Dorsolateral prefrontal cortex (tissue), 120 donors: ENCODE measurements at regions of chr9 and their contacts with region 1.

Region 1: GRCh38 chr9:129610473-129611301 is 10.2 kb downstream of the C9orf50 start:
- DNase-seq: peak in 9 of 10 donors; percentile 64 to 81 (median 76)
- H3K4me3 ChIP-seq: peak overlapping the region; percentile 40 to 70 (median 60)
- H3K27ac ChIP-seq: peak overlapping the region; percentile 5 to 97 (median 92)
- H3K27me3 ChIP-seq: no peaks in the 10 kb centered on the region
- CTCF ChIP-seq: peak; percentile 59 to 99 (median 86)

Region 2: GRCh38 chr9:129177791-129178559 is 432.7 kb before region 1 on chr9 and contains the start of gene IER5L:
- intact Hi-C with region 1: loop called (anchors 1 to 2 kb)
- DNase-seq: peak; percentile 94 to 99 (median 98)
- H3K4me3 ChIP-seq: peak within 1 kb of the TSS; percentile 61 to 94 (median 84)
- H3K27ac ChIP-seq: peak within 1 kb of the TSS; percentile 62 to 100 (median 97)
- H3K27me3 ChIP-seq: no peaks in the 10 kb centered on the region
- CTCF ChIP-seq: peak in 29 of 56 donors; percentile 5 to 48 (median 25)
- total RNA-seq, gene IER5L: 4.7 to 34.0 (median 13.8) TPM

Region 3: DNA sequence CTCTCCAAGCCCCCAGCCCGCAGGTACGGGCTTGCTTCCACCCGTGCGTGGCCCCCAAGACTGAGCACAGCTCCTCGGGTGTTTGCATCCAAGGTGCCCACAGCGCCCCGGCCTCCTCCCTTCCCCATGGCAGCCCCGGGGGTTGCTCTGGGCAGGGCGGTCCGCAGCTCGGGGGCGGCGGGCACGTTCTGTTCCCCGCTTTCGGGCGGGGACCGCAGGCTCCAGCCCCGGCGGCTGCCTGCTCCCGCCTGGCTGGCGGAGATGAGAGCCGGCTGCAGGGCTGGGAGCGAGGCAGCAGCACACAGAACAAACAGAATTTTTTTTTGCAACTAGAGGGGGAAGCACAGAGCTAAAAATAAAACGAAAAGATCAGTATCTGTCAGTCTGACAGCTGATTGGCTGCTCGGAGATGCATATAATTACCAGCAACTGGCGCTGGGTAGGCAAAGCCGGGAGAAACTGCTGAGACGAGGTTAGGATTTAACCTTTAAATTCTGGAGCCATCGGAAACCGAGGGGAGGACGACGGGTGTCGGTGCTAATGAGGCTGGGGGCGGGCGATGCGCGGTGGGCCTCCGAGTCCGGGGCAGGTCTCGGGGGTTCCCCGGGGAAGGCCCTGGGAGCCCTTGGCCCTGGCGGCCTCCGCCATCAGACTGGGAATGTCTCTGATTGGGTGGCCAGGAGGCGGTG is 290.0 kb before region 1 on chr9:
- intact Hi-C with region 1: loop called (anchors 5 kb)
- DNase-seq: peak in 9 of 10 donors; percentile 63 to 83 (median 73)
- H3K4me3 ChIP-seq: peak overlapping the region; percentile 27 to 72 (median 55)
- H3K27ac ChIP-seq: peak overlapping the region; percentile 42 to 99 (median 95)
- H3K27me3 ChIP-seq: no peaks in the 10 kb centered on the region
- CTCF ChIP-seq: peak in 44 of 56 donors; percentile 10 to 60 (median 40)

Region 4: GRCh38 chr9:129482521-129483414 is 127.9 kb before region 1 on chr9:
- intact Hi-C with region 1: loop called in 1 of 2 experiments (anchors 2 kb)
- DNase-seq: peak in 9 of 10 donors; percentile 54 to 81 (median 77)
- H3K4me3 ChIP-seq: peak overlapping the region; percentile 43 to 78 (median 63)
- H3K27ac ChIP-seq: peak overlapping the region; percentile 74 to 100 (median 99)
- H3K27me3 ChIP-seq: no peaks in the 10 kb centered on the region
- CTCF ChIP-seq: peak in 13 of 56 donors; percentile 4 to 48 (median 16)

Region 5: GRCh38 chr9:129550199-129550839 is 60.4 kb before region 1 on chr9:
- intact Hi-C with region 1: loop called in 1 of 2 experiments (anchors 5 kb)
- DNase-seq: peak; percentile 69 to 92 (median 81)
- H3K4me3 ChIP-seq: peak overlapping the region; percentile 33 to 78 (median 68)
- H3K27ac ChIP-seq: peak overlapping the region; percentile 75 to 100 (median 97)
- H3K27me3 ChIP-seq: no peaks in the 10 kb centered on the region
- CTCF ChIP-seq: peak in 23 of 56 donors; percentile 5 to 43 (median 16)